GM12878 (cell line): ENCODE measurements at regions of chr2 and their contacts with region 1.

Region 1: DNA sequence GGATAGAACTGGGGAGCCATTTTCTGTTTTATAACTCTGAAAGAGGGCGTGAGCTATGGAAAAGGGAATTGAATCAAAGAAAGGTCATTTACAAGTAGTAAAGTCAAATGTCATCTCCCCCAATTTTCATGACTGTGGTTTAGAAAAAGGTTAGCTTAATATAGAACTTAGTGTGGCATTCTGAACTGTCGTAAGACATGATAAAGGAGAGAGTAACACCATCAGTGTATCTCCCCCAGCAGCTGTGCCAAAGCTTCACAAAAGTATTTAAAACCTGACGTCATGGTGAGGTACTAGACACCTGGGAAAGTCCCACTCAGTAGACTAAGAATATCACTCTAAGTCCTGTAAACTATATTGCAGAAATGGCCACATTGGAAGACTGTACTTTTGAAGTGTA is 5.8 kb upstream of the IKZF2 start:
- DNase-seq: no peak
- ATAC-seq: peak; percentile 80
- H3K4me3 ChIP-seq: no peak overlapping the region; the same call in 1 of the 2 replicates
- H3K27ac ChIP-seq: peak overlapping the region; percentile 65
- H3K4me1 ChIP-seq: peaks cover 18% of the 10 kb centered on the region
- H3K27me3 ChIP-seq: no peaks in the 10 kb centered on the region
- CTCF ChIP-seq: no peak
- EP300 ChIP-seq: peak; percentile 86 to 88; a peak in 2 of 4 replicates
- POLR2A ChIP-seq: no peak
- RAD21 ChIP-seq: peak; percentile 31; the same call in 1 of the 2 replicates

Region 2: DNA sequence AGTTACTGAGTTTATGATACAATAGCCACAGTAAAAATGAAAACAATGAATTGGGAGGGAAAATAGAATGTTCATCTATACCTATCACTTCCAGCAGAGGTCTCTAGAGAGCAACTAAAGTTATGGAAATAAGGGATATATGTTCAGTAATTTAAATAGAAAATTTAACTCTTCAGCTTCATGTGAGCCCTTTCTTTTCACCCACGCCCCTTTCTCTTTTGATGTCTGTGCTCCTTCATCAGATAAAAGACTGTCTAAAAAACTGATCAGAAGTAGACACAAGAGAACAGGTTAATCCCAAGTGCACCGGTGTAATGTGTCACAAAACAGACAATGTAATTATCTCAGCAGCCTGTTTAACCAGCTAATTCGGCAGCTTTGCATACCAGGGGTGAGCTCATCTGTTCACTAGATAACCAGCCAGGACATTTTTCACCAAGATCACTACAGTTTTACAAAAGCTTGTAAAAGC is 380.2 kb before region 1 on chr2:
- CTCF ChIA-PET with region 1: interaction called, 105 read pairs
- POLR2A ChIA-PET with region 1: interaction called, 9 read pairs
- RAD21 ChIA-PET with region 1: interaction called, 20 read pairs
- SMC1A ChIA-PET with region 1: interaction called, 118 read pairs
- in situ Hi-C with region 1: loop called (anchors 10 kb)
- intact Hi-C with region 1: loop called (anchors 1 kb)
- DNase-seq: peak; percentile 17
- ATAC-seq: peak; percentile 74
- H3K4me3 ChIP-seq: no peak overlapping the region
- H3K27ac ChIP-seq: no peak overlapping the region
- H3K4me1 ChIP-seq: no peaks in the 10 kb centered on the region
- H3K27me3 ChIP-seq: no peaks in the 10 kb centered on the region
- CTCF ChIP-seq: peak; percentile 47 to 63 (median 53)
- EP300 ChIP-seq: no peak
- POLR2A ChIP-seq: no peak
- RAD21 ChIP-seq: peak; percentile 69

Region 3: DNA sequence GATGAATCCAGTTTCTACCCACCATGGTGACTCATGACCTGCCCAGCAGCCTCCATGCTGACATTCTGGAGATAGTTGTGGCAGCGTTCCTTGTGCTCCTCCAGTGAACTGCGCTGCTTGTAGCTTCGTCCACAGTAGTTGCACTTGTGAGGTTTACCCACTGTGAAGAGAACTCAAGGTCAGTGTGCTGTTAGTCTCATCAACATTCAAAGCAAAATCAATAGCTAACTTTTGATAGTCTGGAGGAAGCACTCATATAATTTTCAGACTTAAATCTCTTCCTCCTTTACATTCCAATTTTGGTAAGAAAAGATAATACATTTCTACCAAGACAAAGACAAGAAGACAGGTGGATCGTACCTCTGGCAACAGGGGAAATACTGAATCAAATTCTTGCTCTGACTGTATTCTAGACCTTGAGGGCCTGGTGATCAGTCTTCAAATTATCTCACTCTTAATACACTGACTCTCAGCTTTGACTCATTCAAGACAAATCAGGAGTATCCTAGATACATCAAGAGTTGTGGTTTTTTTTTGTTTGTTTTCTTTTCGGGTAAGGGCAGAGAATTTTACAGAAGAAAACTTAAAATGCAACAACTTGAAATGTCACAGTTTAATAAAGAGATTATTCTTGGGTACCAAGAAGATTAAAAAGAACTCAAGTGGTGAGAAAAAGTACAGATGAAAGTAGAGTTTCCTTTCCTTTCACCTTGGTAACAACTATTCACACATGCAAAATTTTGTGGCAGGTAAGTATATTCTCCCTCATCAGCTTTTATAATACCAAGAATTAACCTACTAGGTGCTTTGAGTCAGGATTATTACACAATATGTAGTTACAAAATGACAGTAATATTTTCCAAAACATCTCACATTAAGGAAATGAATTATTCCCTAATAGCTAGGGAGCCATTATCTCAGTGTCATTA is 135.0 kb before region 1 on chr2:
- CTCF ChIA-PET with region 1: interaction called, 35 read pairs
- POLR2A ChIA-PET with region 1: interaction called, 183 read pairs
- RAD21 ChIA-PET with region 1: interaction called, 386 read pairs
- SMC1A ChIA-PET with region 1: interaction called, 430 read pairs
- in situ Hi-C with region 1: loop called (anchors 5 kb)
- intact Hi-C with region 1: no loop called
- DNase-seq: peak; percentile 87
- ATAC-seq: peak; percentile 78
- H3K4me3 ChIP-seq: peak overlapping the region; percentile 76
- H3K27ac ChIP-seq: peak overlapping the region; percentile 96
- H3K4me1 ChIP-seq: peaks cover 14% of the 10 kb centered on the region; the same call in 1 of the 2 replicates
- H3K27me3 ChIP-seq: no peaks in the 10 kb centered on the region
- CTCF ChIP-seq: no peak
- EP300 ChIP-seq: peak; percentile 80 to 87
- POLR2A ChIP-seq: peak; percentile 88
- RAD21 ChIP-seq: peak; percentile 27; the same call in 1 of the 2 replicates

Region 4: DNA sequence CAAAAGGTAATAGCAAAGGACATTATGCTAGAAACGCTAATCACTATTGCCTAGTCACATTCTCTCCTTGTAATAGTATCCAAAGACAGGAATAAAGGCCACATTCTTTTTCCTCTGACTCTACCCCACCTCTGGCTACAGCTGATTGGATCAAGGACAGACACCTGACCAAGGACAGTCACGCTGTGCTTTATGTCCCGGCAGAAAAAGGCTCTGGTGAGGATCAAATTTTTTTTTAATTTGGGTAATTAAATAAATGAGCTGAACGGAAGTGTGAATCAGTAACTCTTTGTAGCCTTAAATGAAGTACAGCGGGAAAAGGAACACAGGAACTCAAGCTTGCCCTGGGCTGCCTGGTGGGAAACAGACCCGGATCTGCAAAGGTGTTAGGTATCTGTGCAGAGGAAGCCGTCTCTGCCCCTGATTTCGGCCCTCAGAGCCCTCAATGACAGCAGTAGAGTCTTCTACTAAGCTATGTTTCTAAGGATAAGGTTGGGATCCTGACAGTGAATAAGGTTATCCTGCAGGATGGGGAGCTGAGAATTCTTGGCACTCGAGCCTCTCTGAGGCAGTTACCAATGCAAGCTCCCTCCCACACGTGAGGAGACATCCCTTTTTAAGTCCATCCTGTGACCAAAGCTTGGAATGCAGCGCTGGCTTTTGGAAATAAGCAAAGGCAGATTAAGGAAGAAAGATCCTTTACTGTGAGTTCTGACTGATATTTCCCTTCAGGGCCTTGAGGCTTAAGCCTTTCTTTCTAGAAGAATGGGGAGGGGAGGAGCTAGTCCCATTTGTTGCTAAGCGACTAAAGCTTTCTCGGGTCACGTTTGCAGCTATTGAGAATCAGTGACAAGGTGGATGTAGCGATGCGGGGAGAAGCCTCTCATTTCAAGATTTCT is 32.0 kb after region 1 on chr2:
- CTCF ChIA-PET with region 1: interaction called, 5 read pairs
- POLR2A ChIA-PET with region 1: interaction called, 5 read pairs
- RAD21 ChIA-PET with region 1: interaction called, 15 read pairs
- SMC1A ChIA-PET with region 1: interaction called, 22 read pairs
- in situ Hi-C with region 1: no loop called
- intact Hi-C with region 1: no loop called
- DNase-seq: no peak
- ATAC-seq: no peak
- H3K4me3 ChIP-seq: no peak overlapping the region
- H3K27ac ChIP-seq: no peak overlapping the region
- H3K4me1 ChIP-seq: peaks cover 12% of the 10 kb centered on the region
- H3K27me3 ChIP-seq: no peaks in the 10 kb centered on the region
- CTCF ChIP-seq: no peak
- EP300 ChIP-seq: no peak
- POLR2A ChIP-seq: no peak
- RAD21 ChIP-seq: no peak